HCT116 (cell line): ENCODE measurements at regions of chr17 and their contacts with region 1.

Region 1: GRCh38 chr17:55770148-55770870 is 19.5 kb downstream of the PCTP start:
- DNase-seq: peak; percentile 43
- ATAC-seq: peak; percentile 90
- H3K4me3 ChIP-seq: no peak overlapping the region
- H3K27ac ChIP-seq: no peak overlapping the region
- H3K4me1 ChIP-seq: no peaks in the 10 kb centered on the region
- H3K27me3 ChIP-seq: no peaks in the 10 kb centered on the region
- CTCF ChIP-seq: peak; percentile 48 to 83 (median 77)
- POLR2A ChIP-seq: no peak
- RAD21 ChIP-seq: peak; percentile 82

Region 2: DNA sequence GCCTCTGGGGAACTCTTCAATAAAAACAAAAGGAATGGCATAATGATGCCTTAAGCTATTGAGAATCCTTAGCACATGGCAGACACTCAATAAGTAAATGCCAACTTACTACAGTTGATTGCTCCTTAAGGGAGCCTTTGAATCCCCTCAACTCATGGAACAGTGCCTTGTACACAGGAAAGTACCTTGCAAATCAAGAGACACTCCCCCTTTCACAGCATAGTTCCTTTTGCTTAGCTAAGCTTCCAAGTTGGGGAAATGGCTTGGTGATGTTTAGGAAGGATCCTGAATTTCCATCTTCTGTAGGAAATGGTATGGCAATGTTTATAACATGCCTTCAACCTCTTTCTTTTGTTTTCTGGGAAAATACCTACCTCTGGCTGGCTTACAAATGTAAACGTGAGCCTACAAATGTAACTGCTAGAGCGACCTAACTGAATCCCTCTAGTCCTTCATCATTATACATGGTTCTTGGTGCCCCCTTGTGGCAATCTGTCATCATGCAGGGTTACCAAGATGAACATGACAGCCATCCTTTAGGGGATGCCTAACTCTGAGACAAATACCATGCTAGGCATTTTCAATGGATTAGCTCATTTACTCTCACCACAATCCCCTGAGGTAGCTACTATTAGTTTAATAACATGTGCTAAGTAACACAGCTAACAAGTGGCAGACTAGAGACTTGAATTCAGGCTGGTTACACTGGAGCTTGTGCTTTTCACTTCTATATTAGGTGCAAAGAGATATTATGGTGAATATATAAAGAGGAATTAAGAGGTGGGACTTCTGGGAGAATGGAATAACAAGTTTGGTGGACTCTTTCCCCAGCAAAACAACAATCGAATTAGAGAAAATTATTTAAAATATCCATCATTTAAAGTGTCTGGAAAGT is 413.6 kb before region 1 on chr17:
- CTCF ChIA-PET with region 1: no interaction called
- POLR2A ChIA-PET with region 1: no interaction called
- RAD21 ChIA-PET with region 1: no interaction called
- intact Hi-C with region 1: loop called (anchors 10 kb)
- DNase-seq: peak; percentile 84
- ATAC-seq: peak; percentile 100
- H3K4me3 ChIP-seq: no peak overlapping the region
- H3K27ac ChIP-seq: no peak overlapping the region
- H3K4me1 ChIP-seq: peaks cover 0 to 4% of the 10 kb centered on the region in 2 experiments; a peak in 1 of 4 replicates
- H3K27me3 ChIP-seq: no peaks in the 10 kb centered on the region
- CTCF ChIP-seq: peak; percentile 74 to 99 (median 93)
- POLR2A ChIP-seq: no peak
- RAD21 ChIP-seq: peak; percentile 83

Region 3: DNA sequence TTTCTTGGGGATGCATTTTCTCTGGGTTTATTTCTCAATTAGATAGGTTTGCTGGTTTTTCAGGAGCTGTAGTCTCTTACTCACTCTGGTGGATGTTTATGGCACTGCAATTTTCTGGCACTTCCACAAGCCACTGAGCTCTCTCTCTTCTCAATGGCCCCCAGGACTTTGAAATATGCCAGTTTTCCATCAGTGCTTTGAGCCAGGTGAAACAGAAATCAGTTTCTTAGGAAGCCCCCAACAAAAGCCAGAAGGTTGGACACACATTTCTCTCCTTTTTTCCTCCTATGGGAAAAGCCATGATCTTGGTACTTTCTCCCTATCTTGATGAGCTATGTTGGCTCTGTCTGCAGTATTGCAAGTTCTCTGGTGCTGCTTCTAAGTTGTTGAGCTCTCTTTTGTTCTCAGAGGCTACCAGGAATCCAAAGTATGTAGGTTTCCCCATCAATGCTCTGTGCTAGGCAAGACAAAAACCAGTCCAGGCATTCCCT is 168.4 kb before region 1 on chr17:
- CTCF ChIA-PET with region 1: interaction called, 9 read pairs
- POLR2A ChIA-PET with region 1: no interaction called
- RAD21 ChIA-PET with region 1: interaction called in 1 of 2 experiments, 3 read pairs
- intact Hi-C with region 1: loop called (anchors 1 kb)
- DNase-seq: peak; percentile 41
- ATAC-seq: peak; percentile 83
- H3K4me3 ChIP-seq: no peak overlapping the region
- H3K27ac ChIP-seq: no peak overlapping the region
- H3K4me1 ChIP-seq: no peaks in the 10 kb centered on the region
- H3K27me3 ChIP-seq: peaks cover 17% of the 10 kb centered on the region
- CTCF ChIP-seq: peak; percentile 71 to 80 (median 78); a peak in 5 of 6 replicates
- POLR2A ChIP-seq: no peak
- RAD21 ChIP-seq: peak; percentile 67

Region 4: GRCh38 chr17:55641676-55642081 is 128.6 kb before region 1 on chr17:
- CTCF ChIA-PET with region 1: interaction called, 10 read pairs
- POLR2A ChIA-PET with region 1: no interaction called
- RAD21 ChIA-PET with region 1: no interaction called
- intact Hi-C with region 1: no loop called
- DNase-seq: peak; percentile 57
- ATAC-seq: peak; percentile 93
- H3K4me3 ChIP-seq: no peak overlapping the region
- H3K27ac ChIP-seq: no peak overlapping the region
- H3K4me1 ChIP-seq: no peaks in the 10 kb centered on the region
- H3K27me3 ChIP-seq: peaks cover 56% of the 10 kb centered on the region
- CTCF ChIP-seq: peak; percentile 36 to 86 (median 71); a peak in 5 of 6 replicates
- POLR2A ChIP-seq: no peak
- RAD21 ChIP-seq: peak; percentile 47

Region 5: GRCh38 chr17:55705849-55706248 is 64.5 kb before region 1 on chr17:
- CTCF ChIA-PET with region 1: no interaction called
- POLR2A ChIA-PET with region 1: no interaction called
- RAD21 ChIA-PET with region 1: no interaction called
- intact Hi-C with region 1: no loop called
- DNase-seq: no peak
- ATAC-seq: no peak; the same call in 1 of the 2 replicates
- H3K4me3 ChIP-seq: no peak overlapping the region
- H3K27ac ChIP-seq: no peak overlapping the region
- H3K4me1 ChIP-seq: peaks cover 2 to 4% of the 10 kb centered on the region in 2 experiments; a peak in 1 of 4 replicates
- H3K27me3 ChIP-seq: peaks cover 71% of the 10 kb centered on the region
- CTCF ChIP-seq: no peak
- POLR2A ChIP-seq: no peak
- RAD21 ChIP-seq: no peak

Region 6: GRCh38 chr17:55726440-55726839 is 43.9 kb before region 1 on chr17:
- CTCF ChIA-PET with region 1: no interaction called
- POLR2A ChIA-PET with region 1: no interaction called
- RAD21 ChIA-PET with region 1: no interaction called
- intact Hi-C with region 1: no loop called
- DNase-seq: no peak
- ATAC-seq: no peak
- H3K4me3 ChIP-seq: no peak overlapping the region
- H3K27ac ChIP-seq: no peak overlapping the region
- H3K4me1 ChIP-seq: no peaks in the 10 kb centered on the region
- H3K27me3 ChIP-seq: peaks cover 90% of the 10 kb centered on the region
- CTCF ChIP-seq: no peak
- POLR2A ChIP-seq: no peak
- RAD21 ChIP-seq: no peak

Region 7: DNA sequence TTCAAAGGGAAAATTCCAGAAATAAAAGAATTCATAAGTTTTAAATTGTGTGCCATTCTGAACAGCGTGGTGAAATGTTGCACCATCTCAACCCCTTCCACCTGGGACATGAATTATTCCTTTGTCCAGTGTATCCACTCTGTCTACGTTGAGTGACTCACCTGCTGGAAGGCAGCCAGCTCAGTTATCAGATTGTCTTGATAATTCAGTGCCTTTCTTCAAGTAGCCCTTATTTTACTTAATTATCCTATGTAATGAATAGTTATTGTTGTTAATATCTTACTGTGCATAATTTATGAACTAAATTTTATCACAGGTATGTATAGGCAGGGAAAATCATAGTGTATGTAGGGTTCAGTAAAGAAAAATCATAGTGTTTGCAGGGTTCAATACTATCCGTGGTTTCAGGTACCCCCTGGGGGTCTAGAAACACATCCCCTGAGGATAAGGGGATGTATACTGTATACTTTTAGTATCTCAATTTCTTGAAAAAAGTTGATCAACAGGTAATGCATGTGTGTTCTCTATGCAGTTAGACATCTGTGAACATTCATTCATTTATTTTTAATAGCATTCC is 27.1 kb before region 1 on chr17:
- CTCF ChIA-PET with region 1: interaction called, 11 read pairs
- POLR2A ChIA-PET with region 1: no interaction called
- RAD21 ChIA-PET with region 1: no interaction called
- intact Hi-C with region 1: no loop called
- DNase-seq: peak; percentile 85
- ATAC-seq: peak; percentile 89
- H3K4me3 ChIP-seq: peak overlapping the region; percentile 3 to 28; a peak in 3 of 4 replicates
- H3K27ac ChIP-seq: no peak overlapping the region
- H3K4me1 ChIP-seq: peaks cover 9 to 16% of the 10 kb centered on the region in 2 experiments; a peak in 3 of 4 replicates
- H3K27me3 ChIP-seq: no peaks in the 10 kb centered on the region
- CTCF ChIP-seq: no peak
- POLR2A ChIP-seq: no peak
- RAD21 ChIP-seq: no peak